Activated CD4-positive, alpha-beta T cell treated with anti-CD3 and anti-CD28 coated beads, Interleukin-2, amount 10 ng/mL, durations not matched to agents 24 days and 14 days (primary cell): ENCODE measurements at regions of chr4 and their contacts with region 1.

Region 1: GRCh38 chr4:54547299-54548097 is 110.3 kb upstream of the KIT start:
- DNase-seq: peak; percentile 65
- H3K4me3 Mint-ChIP-seq: peak overlapping the region; percentile 36
- H3K27ac Mint-ChIP-seq: peak overlapping the region; percentile 86
- H3K4me1 Mint-ChIP-seq: peaks cover 4% of the 10 kb centered on the region
- H3K27me3 Mint-ChIP-seq: no peaks in the 10 kb centered on the region

Region 2: GRCh38 chr4:54277691-54278090 is 269.8 kb before region 1 on chr4:
- intact Hi-C with region 1: loop called (anchors 5 kb)
- DNase-seq: peak; percentile 58
- H3K4me3 Mint-ChIP-seq: peak overlapping the region; percentile 14
- H3K27ac Mint-ChIP-seq: peak overlapping the region; percentile 63
- H3K4me1 Mint-ChIP-seq: peaks cover 20% of the 10 kb centered on the region
- H3K27me3 Mint-ChIP-seq: no peaks in the 10 kb centered on the region

Region 3: GRCh38 chr4:54315561-54316538 is 231.6 kb before region 1 on chr4:
- intact Hi-C with region 1: loop called (anchors 2 kb)
- DNase-seq: peak; percentile 68
- H3K4me3 Mint-ChIP-seq: peak overlapping the region; percentile 38
- H3K27ac Mint-ChIP-seq: peak overlapping the region; percentile 75
- H3K4me1 Mint-ChIP-seq: peaks cover 30% of the 10 kb centered on the region
- H3K27me3 Mint-ChIP-seq: peaks cover 3% of the 10 kb centered on the region

Region 4: GRCh38 chr4:54800831-54801530 is 253.5 kb after region 1 on chr4:
- intact Hi-C with region 1: no loop called
- DNase-seq: no peak
- H3K4me3 Mint-ChIP-seq: no peak overlapping the region
- H3K27ac Mint-ChIP-seq: no peak overlapping the region
- H3K4me1 Mint-ChIP-seq: no peaks in the 10 kb centered on the region
- H3K27me3 Mint-ChIP-seq: no peaks in the 10 kb centered on the region

Region 5: GRCh38 chr4:54941994-54942552 is 394.6 kb after region 1 on chr4:
- intact Hi-C with region 1: loop called (anchors 1 kb)
- DNase-seq: peak; percentile 81
- H3K4me3 Mint-ChIP-seq: peak overlapping the region; percentile 64
- H3K27ac Mint-ChIP-seq: peak overlapping the region; percentile 80
- H3K4me1 Mint-ChIP-seq: peaks cover 38% of the 10 kb centered on the region
- H3K27me3 Mint-ChIP-seq: no peaks in the 10 kb centered on the region